ENCODE measurements at regions of chr11 and their contacts with region 1.

Region 1: DNA sequence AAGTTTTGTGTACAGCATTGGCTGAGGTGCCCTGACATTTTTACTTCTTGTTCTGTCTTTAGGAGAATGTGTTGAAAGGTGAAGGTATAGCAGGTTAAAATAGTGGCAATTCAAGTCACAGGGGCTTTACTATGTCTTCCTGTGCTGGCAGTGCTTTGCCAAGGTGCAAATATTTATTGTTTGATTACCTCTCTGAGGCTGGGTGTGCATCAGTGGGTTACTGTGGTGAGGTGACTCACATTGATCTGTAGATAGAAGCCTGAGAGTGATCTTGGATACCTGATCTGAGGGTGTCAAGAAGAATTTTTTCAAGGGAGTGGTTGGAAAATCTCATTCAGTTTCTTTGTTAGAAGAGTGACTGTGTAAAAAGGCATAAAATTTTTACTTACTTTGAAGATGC is 90.0 kb downstream of the ARHGAP42 start:
- DNase-seq: peak; percentile 93
- ATAC-seq: peak; percentile 85
- H3K4me3 ChIP-seq: peak overlapping the region; percentile 6 to 46
- H3K27ac ChIP-seq: peak overlapping the region; percentile 88
- H3K4me1 ChIP-seq: peaks cover 42 to 59% of the 10 kb centered on the region in 2 experiments
- H3K27me3 ChIP-seq: no peaks in the 10 kb centered on the region
- CTCF ChIP-seq: no peak
- POLR2A ChIP-seq: no peak
- RAD21 ChIP-seq: peak; percentile 25; the same call in 1 of the 2 replicates

Region 2: GRCh38 chr11:100753172-100753543 is 23.9 kb before region 1 on chr11:
- CTCF ChIA-PET with region 1: no interaction called
- POLR2A ChIA-PET with region 1: interaction called, 4 read pairs
- RAD21 ChIA-PET with region 1: no interaction called
- intact Hi-C with region 1: loop called (anchors 1 kb)
- DNase-seq: no peak
- ATAC-seq: peak; percentile 57
- H3K4me3 ChIP-seq: no peak overlapping the region
- H3K27ac ChIP-seq: peak overlapping the region; percentile 85
- H3K4me1 ChIP-seq: peaks cover 51 to 73% of the 10 kb centered on the region in 2 experiments
- H3K27me3 ChIP-seq: no peaks in the 10 kb centered on the region
- CTCF ChIP-seq: no peak
- POLR2A ChIP-seq: no peak
- RAD21 ChIP-seq: no peak